ENCODE measurements at regions of chr2 and their contacts with region 1.

Region 1: DNA sequence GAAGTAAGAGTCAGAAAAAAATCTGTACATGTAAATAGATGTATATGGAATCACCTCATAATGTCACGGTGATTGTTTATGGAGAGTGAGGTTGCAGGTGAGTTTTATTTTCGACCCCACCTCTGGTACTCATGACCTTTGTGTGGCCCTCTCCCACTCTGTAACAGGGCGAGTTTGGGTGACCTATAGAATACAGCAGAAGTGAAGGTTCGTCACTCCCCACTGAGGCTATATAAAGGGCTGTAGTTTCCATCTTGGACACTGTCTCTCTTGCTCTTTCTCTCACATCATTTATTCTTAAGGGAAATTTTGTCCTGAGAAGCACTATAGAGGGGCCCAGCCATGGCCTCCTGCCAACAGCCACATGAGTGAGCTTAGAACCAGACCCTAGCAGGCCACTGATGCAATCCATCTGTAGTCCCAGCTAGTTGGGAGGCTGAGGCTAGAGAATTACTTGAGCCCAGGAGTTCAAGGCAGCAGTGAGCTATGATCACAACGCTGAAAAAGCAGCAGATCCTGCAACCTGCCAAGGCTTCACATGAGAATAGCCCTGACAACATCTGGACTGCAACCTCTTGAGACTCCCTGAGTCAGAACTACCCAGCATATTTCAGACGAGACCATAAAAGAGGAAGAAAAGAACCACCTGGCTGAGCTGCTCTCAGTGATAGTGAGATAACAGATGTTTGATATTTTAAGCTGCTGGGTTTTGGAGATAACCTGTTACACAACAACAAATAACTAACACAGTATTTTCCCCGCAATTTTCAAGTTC is 74.3 kb upstream of the SLC1A4 start:
- DNase-seq: no peak
- ATAC-seq: no peak
- H3K4me3 ChIP-seq: no peak overlapping the region
- H3K27ac ChIP-seq: no peak overlapping the region
- H3K4me1 ChIP-seq: no peaks in the 10 kb centered on the region
- CTCF ChIP-seq: no peak
- EP300 ChIP-seq: no peak
- POLR2A ChIP-seq: no peak
- RAD21 ChIP-seq: no peak

Region 2: DNA sequence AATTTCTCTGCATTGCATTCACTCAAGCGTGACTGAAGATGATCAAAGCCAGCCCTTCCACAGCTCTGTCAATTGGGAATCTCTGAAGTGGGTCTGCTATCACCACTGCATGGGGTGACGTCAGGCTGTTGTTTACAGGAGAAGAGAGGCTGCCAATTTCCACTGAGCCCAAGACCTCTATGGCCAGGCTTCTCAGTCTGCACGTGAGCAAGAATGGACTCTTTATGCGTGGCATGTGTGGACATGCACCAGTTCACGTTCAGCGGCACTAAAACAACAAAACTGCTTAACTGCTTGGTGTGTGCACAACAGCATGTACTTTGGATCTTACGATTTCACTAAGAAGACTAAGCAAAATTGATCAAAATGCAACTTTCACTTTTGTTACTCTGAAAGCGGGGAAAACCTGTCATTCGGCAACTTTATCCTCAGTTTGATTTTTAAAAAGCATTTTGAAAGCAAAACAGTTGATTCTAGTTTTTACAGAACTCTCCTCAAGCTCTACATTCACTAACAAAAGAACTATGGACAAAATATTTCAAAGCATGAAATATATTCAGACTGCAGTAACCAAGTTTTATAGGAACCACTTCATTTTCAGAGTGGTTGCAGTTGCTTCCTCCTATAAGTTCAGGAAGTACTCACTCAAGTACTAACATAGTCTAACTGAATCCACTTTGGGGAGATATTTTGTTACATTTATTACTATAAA is 184.2 kb before region 1 on chr2:
- CTCF ChIA-PET with region 1: no interaction called
- POLR2A ChIA-PET with region 1: no interaction called
- DNase-seq: no peak
- ATAC-seq: peak in 1 of 2 experiments; percentile 30; a peak in 2 of 6 replicates
- H3K4me3 ChIP-seq: no peak overlapping the region
- H3K27ac ChIP-seq: 0 out of 6 replicates have a peak overlapping the region, but pooled peaks of 1 of the 2 experiments have one; percentile 6
- H3K4me1 ChIP-seq: peaks cover 8% of the 10 kb centered on the region; the same call in 1 of the 3 replicates
- CTCF ChIP-seq: no peak
- EP300 ChIP-seq: no peak
- POLR2A ChIP-seq: no peak
- RAD21 ChIP-seq: no peak

Region 3: GRCh38 chr2:64932371-64933216 is 17.7 kb after region 1 on chr2:
- CTCF ChIA-PET with region 1: interaction called, 19 read pairs
- POLR2A ChIA-PET with region 1: no interaction called
- DNase-seq: no peak
- ATAC-seq: no peak
- H3K4me3 ChIP-seq: no peak overlapping the region
- H3K27ac ChIP-seq: no peak overlapping the region
- H3K4me1 ChIP-seq: no peaks in the 10 kb centered on the region
- CTCF ChIP-seq: no peak
- EP300 ChIP-seq: no peak
- POLR2A ChIP-seq: no peak
- RAD21 ChIP-seq: no peak

Region 4: DNA sequence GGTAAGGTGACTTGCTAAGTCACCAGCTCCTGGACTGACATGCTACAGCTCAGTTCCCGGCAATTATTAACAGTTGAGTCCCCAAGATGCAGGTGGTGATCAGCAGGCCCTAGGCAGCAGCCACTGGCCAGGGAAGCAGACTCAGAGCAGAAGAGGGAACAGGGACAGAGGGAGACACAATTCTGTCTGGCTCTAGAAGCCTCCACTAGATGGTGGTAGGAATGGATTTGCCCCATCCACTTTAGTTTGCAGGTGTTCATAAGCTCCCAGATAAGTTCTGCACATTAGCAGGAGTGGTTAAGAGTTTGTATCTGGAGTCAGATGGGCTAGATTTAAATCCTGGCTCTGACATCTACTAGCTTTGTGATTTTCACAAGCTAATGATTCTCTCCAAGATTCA is 48.8 kb after region 1 on chr2:
- CTCF ChIA-PET with region 1: interaction called, 12 read pairs
- POLR2A ChIA-PET with region 1: no interaction called
- DNase-seq: no peak
- ATAC-seq: peak; percentile 50 to 57; a peak in 2 of 6 replicates
- H3K4me3 ChIP-seq: no peak overlapping the region
- H3K27ac ChIP-seq: no peak overlapping the region
- H3K4me1 ChIP-seq: 0 out of 3 replicates have a peak, but pooled peaks cover 5% of the 10 kb centered on the region
- CTCF ChIP-seq: no peak
- EP300 ChIP-seq: no peak
- POLR2A ChIP-seq: no peak
- RAD21 ChIP-seq: no peak

Region 5: GRCh38 chr2:65003037-65003436 is 88.1 kb after region 1 on chr2:
- CTCF ChIA-PET with region 1: interaction called, 99 read pairs
- POLR2A ChIA-PET with region 1: no interaction called
- DNase-seq: no peak
- ATAC-seq: no peak
- H3K4me3 ChIP-seq: no peak overlapping the region
- H3K27ac ChIP-seq: no peak overlapping the region
- H3K4me1 ChIP-seq: peaks cover 14% of the 10 kb centered on the region
- CTCF ChIP-seq: no peak
- EP300 ChIP-seq: no peak
- POLR2A ChIP-seq: no peak
- RAD21 ChIP-seq: no peak

Region 6: GRCh38 chr2:65031341-65032018 is 116.6 kb after region 1 on chr2:
- CTCF ChIA-PET with region 1: interaction called, 177 read pairs
- POLR2A ChIA-PET with region 1: interaction called, 3 read pairs
- DNase-seq: no peak
- ATAC-seq: peak; percentile 16 to 35; a peak in 2 of 6 replicates
- H3K4me3 ChIP-seq: no peak overlapping the region
- H3K27ac ChIP-seq: no peak overlapping the region
- H3K4me1 ChIP-seq: peaks cover 12% of the 10 kb centered on the region; the same call in 2 of the 3 replicates
- CTCF ChIP-seq: no peak
- EP300 ChIP-seq: no peak
- POLR2A ChIP-seq: no peak
- RAD21 ChIP-seq: no peak

Region 7: GRCh38 chr2:65186872-65187851 is 272.2 kb after region 1 on chr2:
- CTCF ChIA-PET with region 1: interaction called, 22 read pairs
- POLR2A ChIA-PET with region 1: no interaction called
- DNase-seq: peak; percentile 83 to 88
- ATAC-seq: peak; percentile 98 to 99
- H3K4me3 ChIP-seq: no peak overlapping the region
- H3K27ac ChIP-seq: no peak overlapping the region
- H3K4me1 ChIP-seq: 0 out of 3 replicates have a peak, but pooled peaks cover 4% of the 10 kb centered on the region
- CTCF ChIP-seq: peak; percentile 90
- EP300 ChIP-seq: no peak
- POLR2A ChIP-seq: no peak
- RAD21 ChIP-seq: peak; percentile 86 to 91